ENCODE measurements at regions of chr6 and their contacts with region 1.

Region 1: DNA sequence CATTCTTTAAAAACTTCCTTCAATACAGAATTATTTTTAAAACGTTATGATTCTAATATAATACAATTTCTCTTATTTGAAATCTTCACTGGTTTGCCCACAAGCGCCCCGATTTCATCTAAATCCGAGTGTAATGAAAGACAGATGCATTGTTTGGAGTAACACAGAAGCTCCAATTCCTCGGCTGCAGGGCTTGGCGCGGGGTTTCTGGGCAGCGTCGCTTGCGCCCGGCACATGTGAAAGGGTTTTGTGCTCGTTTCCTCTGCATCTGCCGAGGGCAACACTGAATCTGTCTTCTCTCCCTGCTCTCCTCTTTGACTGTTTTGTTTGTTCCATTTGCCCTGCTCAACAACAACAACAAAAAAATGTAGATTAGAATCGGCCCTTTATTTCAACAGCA is 248.6 kb upstream of the QKI start:
- DNase-seq: no peak
- H3K4me3 ChIP-seq: no peak overlapping the region
- H3K27ac ChIP-seq: no peak overlapping the region
- H3K4me1 ChIP-seq: no peaks in the 10 kb centered on the region
- H3K27me3 ChIP-seq: no peaks in the 10 kb centered on the region
- CTCF ChIP-seq: no peak
- POLR2A ChIP-seq: no peak

Region 2: DNA sequence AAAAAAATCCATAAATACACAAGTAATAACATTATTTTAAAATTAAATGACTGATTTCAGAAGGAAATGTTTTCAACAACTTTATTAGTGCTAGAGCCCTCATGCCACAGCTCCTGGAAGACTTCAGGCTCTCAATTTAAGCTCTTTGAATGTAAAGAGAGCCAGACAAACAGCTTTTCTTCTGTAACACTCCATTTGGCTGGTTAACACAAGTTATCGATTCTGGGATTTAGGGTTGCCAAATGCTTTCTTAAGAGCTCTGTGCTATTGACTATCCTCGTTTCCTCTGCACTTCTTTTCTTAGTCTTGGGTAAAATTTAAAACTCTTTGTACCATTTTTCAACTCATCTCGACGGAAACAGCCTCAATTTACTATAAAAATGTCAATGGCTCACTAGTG is 840.9 kb before region 1 on chr6:
- intact Hi-C with region 1: no loop called
- DNase-seq: no peak
- H3K4me3 ChIP-seq: no peak overlapping the region
- H3K27ac ChIP-seq: no peak overlapping the region
- H3K4me1 ChIP-seq: no peaks in the 10 kb centered on the region
- H3K27me3 ChIP-seq: no peaks in the 10 kb centered on the region
- CTCF ChIP-seq: no peak
- POLR2A ChIP-seq: no peak

Region 3: DNA sequence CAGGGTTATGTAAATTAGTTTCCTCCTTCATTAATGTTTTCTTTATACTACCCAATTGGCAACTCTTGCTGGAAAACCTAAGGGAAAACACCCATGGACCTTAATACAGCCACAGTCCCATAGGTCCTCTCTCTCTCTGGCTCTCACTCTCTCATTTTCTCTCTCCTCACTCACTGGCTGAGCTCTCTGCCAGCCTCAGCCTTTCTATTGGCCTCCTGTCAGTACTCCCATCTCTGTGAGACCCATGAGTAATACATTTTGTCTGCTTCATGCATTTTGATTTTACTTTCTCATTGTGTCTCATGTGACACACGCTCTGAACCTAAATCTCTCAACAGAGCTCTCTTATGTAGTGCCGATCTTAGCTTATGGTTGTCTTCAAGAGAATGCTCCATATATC is 1235.9 kb after region 1 on chr6:
- intact Hi-C with region 1: no loop called
- DNase-seq: no peak
- H3K4me3 ChIP-seq: no peak overlapping the region
- H3K27ac ChIP-seq: no peak overlapping the region
- H3K4me1 ChIP-seq: peaks cover 4% of the 10 kb centered on the region
- H3K27me3 ChIP-seq: no peaks in the 10 kb centered on the region
- CTCF ChIP-seq: no peak
- POLR2A ChIP-seq: no peak

Region 4: GRCh38 chr6:164612751-164613150 is 1446.8 kb after region 1 on chr6:
- intact Hi-C with region 1: loop called (anchors 5 kb)
- DNase-seq: no peak
- H3K4me3 ChIP-seq: no peak overlapping the region
- H3K27ac ChIP-seq: no peak overlapping the region
- H3K4me1 ChIP-seq: no peaks in the 10 kb centered on the region
- H3K27me3 ChIP-seq: no peaks in the 10 kb centered on the region
- CTCF ChIP-seq: no peak
- POLR2A ChIP-seq: no peak

Region 5: DNA sequence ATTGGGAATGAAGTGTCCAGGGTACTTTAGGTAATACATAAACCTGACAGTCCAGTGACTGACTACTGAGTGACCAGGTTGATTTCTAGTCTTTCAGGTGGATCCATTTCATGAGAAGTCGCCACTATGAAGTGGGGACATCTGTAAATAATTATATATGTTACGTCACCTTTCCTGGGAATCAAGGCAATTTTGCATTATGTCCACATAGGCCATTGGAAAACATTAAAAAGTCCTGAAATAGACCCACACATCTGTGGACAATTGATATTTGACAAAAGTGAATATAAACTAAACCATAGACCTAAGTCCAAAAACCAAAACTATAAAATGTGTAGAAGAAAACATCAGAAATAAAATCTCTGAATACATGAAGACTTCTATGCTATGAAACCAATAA is 1912.0 kb after region 1 on chr6:
- intact Hi-C with region 1: loop called (anchors 5 kb)
- DNase-seq: no peak
- H3K4me3 ChIP-seq: no peak overlapping the region
- H3K27ac ChIP-seq: no peak overlapping the region
- H3K4me1 ChIP-seq: no peaks in the 10 kb centered on the region
- H3K27me3 ChIP-seq: no peaks in the 10 kb centered on the region
- CTCF ChIP-seq: no peak
- POLR2A ChIP-seq: no peak